Lower leg skin (tissue), 4 donors: ENCODE measurements at regions of chr15 and their contacts with region 1.

Region 1: GRCh38 chr15:70608144-70608543 is 155.2 kb downstream of the UACA start:
- DNase-seq: no peak
- H3K4me3 ChIP-seq: no peak overlapping the region
- CTCF ChIP-seq: no peak
- POLR2A ChIP-seq: no peak

Region 2: DNA sequence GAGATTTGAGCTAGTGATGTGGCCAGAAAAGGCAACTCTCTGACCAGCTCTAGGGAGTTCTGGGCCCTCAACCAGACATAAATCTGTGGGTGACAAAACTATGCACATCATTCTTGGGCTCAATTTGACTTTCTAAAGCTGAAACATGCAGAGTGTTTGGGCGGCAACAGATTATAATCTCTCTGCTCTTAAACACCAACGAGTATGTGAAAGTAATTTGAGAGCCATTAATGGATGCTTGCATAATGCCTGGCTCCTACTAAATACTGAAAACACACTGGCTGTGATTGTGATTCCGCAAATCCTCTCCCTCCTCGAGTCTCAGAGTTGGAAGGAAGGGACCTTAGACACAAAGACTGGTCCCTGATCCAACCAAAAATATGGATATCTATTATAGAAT is 31.4 kb before region 1 on chr15:
- intact Hi-C with region 1: loop called (anchors 1 kb)
- DNase-seq: no peak
- H3K4me3 ChIP-seq: no peak overlapping the region
- CTCF ChIP-seq: no peak
- POLR2A ChIP-seq: no peak

Region 3: GRCh38 chr15:70741107-70741531 is 133.0 kb after region 1 on chr15:
- intact Hi-C with region 1: no loop called
- DNase-seq: peak; percentile 81 to 90
- H3K4me3 ChIP-seq: no peak overlapping the region
- CTCF ChIP-seq: no peak
- POLR2A ChIP-seq: no peak

Region 4: GRCh38 chr15:70845602-70846360 is 237.6 kb after region 1 on chr15:
- intact Hi-C with region 1: no loop called
- DNase-seq: no peak
- H3K4me3 ChIP-seq: no peak overlapping the region
- CTCF ChIP-seq: no peak
- POLR2A ChIP-seq: no peak